Esophagus squamous epithelium (tissue), 5 donors: ENCODE measurements at regions of chr10 and their contacts with region 1.

Region 1: GRCh38 chr10:13787015-13787421 is 200.3 kb downstream of the PRPF18 start:
- DNase-seq: no peak
- H3K4me3 ChIP-seq: no peak overlapping the region
- H3K27ac ChIP-seq: peak overlapping the region in 2 of 4 donors; percentile 35 to 78
- H3K4me1 ChIP-seq: peaks cover 17 to 29% (median 22%) of the 10 kb centered on the region in 3 donors
- H3K27me3 ChIP-seq: no peaks in the 10 kb centered on the region
- CTCF ChIP-seq: no peak
- POLR2A ChIP-seq: no peak

Region 2: DNA sequence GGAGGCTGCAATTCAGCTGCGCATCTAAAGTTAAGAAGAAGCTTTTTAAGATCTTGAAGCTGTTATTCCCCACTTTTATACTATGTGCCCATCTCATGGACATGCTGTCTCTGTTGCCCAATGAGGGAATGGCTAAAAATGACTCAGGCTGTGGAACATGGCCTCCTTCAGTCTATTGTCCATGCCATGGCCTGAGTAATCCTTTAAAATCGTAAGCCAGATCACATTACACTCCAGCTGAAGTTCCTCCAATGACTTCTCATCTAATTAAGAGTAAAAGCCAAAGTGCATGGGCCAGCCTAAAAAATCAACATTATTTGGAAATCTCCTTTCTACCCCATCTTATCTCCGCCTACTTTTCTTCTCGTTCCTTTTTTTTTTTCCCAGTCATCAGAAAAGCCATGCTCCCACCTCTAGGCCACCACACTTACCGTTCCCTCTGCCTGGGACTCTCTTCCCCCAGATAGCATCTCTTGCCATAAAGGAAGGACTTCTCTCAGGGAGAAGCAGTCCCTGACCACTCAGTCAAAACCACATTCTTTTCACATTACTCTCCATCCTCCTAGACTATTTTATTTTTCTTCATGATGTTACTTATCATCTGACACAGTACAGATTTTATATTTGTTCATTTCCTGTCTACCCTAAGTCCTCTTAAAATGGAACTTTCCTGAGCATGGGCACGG is 137.2 kb after region 1 on chr10:
- intact Hi-C with region 1: no loop called
- DNase-seq: no peak
- H3K4me3 ChIP-seq: no peak overlapping the region
- H3K27ac ChIP-seq: peak overlapping the region in 2 of 4 donors; percentile 42 to 71
- H3K4me1 ChIP-seq: no peaks in the 10 kb centered on the region
- H3K27me3 ChIP-seq: no peaks in the 10 kb centered on the region
- CTCF ChIP-seq: no peak
- POLR2A ChIP-seq: no peak

Region 3: DNA sequence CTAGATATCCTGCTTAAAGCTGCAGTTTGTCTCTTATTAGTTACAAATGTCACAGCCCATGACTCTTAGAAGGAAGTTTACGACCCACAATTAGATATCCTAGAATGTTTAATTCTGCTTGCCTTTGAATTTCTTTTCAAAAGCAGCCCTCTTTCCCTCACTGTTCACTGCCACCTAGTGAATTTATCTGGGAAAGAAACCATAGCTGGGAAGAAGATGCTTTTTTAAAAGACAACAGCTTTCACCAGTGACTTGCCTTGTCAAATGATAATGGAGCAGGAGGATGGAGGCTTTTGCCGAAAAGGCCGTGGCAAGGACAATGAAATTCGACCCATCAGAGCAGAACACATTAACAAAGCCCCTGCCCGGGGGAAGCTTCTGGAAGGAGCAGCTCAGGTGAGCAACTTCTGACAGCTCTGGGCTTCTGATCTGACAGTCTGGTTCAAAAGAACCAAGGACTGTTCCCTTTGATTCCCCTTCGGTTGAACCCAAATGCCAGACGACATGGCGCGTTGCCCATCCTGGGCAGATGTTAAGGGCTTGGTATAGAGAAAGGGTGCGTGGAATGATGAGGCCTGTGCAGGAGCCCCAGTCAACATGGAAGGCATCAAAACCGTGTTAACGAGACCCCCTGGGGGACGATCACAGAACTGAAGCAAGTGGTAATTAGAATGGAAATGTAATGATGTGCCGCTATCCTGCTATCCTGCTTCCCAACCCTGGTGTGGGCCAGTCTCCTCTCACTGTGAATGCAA is 306.9 kb after region 1 on chr10:
- intact Hi-C with region 1: loop called (anchors 5 kb)
- DNase-seq: no peak
- H3K4me3 ChIP-seq: no peak overlapping the region
- H3K27ac ChIP-seq: no peak overlapping the region
- H3K4me1 ChIP-seq: peaks cover 0 to 10% (median 0%) of the 10 kb centered on the region in 3 donors
- H3K27me3 ChIP-seq: no peaks in the 10 kb centered on the region
- CTCF ChIP-seq: peak in 4 of 6 experiments; percentile 23 to 47 (median 42)
- POLR2A ChIP-seq: no peak

Region 4: GRCh38 chr10:14191871-14192270 is 404.9 kb after region 1 on chr10:
- intact Hi-C with region 1: loop called (anchors 10 kb)
- DNase-seq: no peak
- H3K4me3 ChIP-seq: no peak overlapping the region
- H3K27ac ChIP-seq: no peak overlapping the region
- H3K4me1 ChIP-seq: no peaks in the 10 kb centered on the region
- H3K27me3 ChIP-seq: peaks cover 0 to 10% (median 0%) of the 10 kb centered on the region in 4 donors
- CTCF ChIP-seq: no peak
- POLR2A ChIP-seq: no peak

Region 5: GRCh38 chr10:14478604-14479003 is 691.6 kb after region 1 on chr10:
- intact Hi-C with region 1: loop called (anchors 10 kb)
- DNase-seq: no peak
- H3K4me3 ChIP-seq: no peak overlapping the region
- H3K27ac ChIP-seq: no peak overlapping the region
- H3K4me1 ChIP-seq: no peaks in the 10 kb centered on the region
- H3K27me3 ChIP-seq: peaks cover 0 to 3% (median 0%) of the 10 kb centered on the region in 4 donors
- CTCF ChIP-seq: peak in 5 of 6 experiments; percentile 28 to 53 (median 33)
- POLR2A ChIP-seq: no peak